Activated CD4-positive, alpha-beta T cell treated with anti-CD3 and anti-CD28 coated beads, Interleukin-2, amount 10 ng/mL, durations not matched to agents 24 days and 14 days (primary cell): ENCODE measurements at regions of chr1 and their contacts with region 1.

Region 1: GRCh38 chr1:182391362-182392044 is at the start of gene GLUL:
- DNase-seq: peak; percentile 94
- H3K4me3 Mint-ChIP-seq: peak within 1 kb of the TSS; percentile 96
- H3K27ac Mint-ChIP-seq: peak within 1 kb of the TSS; percentile 93
- H3K4me1 Mint-ChIP-seq: peaks cover 40% of the 10 kb centered on the region
- H3K27me3 Mint-ChIP-seq: peaks cover 18% of the 10 kb centered on the region
- total RNA-seq, gene GLUL: 78.1 and 80.2 TPM in 2 replicates

Region 2: GRCh38 chr1:181479137-181479745 is 912.3 kb before region 1 on chr1:
- intact Hi-C with region 1: loop called (anchors 10 kb)
- DNase-seq: peak; percentile 79
- H3K4me3 Mint-ChIP-seq: no peak overlapping the region
- H3K27ac Mint-ChIP-seq: no peak overlapping the region
- H3K4me1 Mint-ChIP-seq: peaks cover 7% of the 10 kb centered on the region
- H3K27me3 Mint-ChIP-seq: peaks cover 36% of the 10 kb centered on the region

Region 3: DNA sequence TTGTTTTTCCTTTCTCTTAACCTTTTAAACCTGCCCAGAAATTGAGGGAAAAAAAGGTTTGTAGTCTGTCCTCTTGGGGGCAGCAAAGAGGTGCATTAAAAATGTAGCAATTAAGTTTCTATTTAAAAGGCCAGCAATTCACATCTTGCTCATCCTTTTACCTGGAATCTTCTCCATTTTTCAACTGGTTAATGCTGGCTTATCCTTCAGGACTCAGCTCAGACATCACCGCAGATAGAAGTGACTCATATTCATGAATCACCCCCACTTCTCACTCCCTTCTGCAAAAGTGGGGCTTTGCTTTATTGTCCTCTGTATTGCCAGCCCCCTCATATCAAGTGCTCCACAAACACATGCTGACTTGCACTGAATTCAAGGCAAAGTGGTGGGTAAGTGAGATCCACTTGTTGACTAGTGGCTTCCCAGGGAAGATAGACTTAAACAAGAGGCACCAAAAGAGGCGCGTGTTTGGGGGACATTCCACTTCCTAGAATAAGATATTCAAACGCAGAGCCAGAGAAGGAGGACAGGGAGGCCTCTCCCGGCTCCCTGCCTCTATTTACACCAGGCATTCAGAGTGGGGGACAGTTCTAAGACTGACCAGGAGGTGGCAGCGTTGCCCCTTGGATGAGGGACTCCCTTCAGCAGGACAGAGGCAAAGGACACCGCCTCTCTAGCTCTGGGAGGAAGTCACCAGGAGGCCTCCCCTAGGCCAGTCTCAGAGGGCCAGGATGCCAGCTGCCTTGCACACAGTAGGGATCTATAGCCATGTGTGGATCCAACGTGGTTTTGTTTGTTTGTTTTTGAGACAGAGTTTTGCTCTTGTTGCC is 306.8 kb before region 1 on chr1:
- intact Hi-C with region 1: loop called (anchors 1 kb)
- DNase-seq: peak; percentile 95
- H3K4me3 Mint-ChIP-seq: peak overlapping the region; percentile 13
- H3K27ac Mint-ChIP-seq: peak overlapping the region; percentile 66
- H3K4me1 Mint-ChIP-seq: peaks cover 51% of the 10 kb centered on the region
- H3K27me3 Mint-ChIP-seq: no peaks in the 10 kb centered on the region

Region 4: DNA sequence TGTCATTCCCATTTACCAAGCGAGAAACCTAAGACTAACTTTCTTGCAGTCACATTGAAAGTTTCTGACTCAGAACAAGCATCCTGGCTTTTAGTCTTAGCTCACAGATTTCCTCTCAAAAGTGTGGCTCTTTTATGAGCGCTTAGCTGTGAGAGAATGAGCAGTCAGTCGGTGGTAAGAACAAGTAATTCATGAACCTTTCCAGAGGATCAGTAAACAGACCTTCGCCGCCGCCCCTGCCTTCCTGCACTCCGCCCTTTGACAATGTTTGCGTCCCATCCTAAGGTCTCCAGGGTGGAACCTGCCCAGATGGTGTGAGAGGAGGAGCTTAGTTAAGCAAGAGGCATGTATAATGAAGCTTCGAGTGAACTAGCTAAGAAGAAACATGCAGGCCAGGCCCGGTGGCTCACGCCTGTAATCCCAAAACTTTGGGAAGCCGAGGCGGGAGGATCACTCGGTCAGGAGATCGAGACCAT is 142.3 kb before region 1 on chr1:
- intact Hi-C with region 1: loop called (anchors 1 kb)
- DNase-seq: peak; percentile 79
- H3K4me3 Mint-ChIP-seq: no peak overlapping the region
- H3K27ac Mint-ChIP-seq: peak overlapping the region; percentile 80
- H3K4me1 Mint-ChIP-seq: peaks cover 14% of the 10 kb centered on the region
- H3K27me3 Mint-ChIP-seq: no peaks in the 10 kb centered on the region

Region 5: GRCh38 chr1:182404781-182405180 is 13.3 kb after region 1 on chr1:
- intact Hi-C with region 1: no loop called
- DNase-seq: no peak
- H3K4me3 Mint-ChIP-seq: no peak overlapping the region
- H3K27ac Mint-ChIP-seq: no peak overlapping the region
- H3K4me1 Mint-ChIP-seq: no peaks in the 10 kb centered on the region
- H3K27me3 Mint-ChIP-seq: peaks cover 43% of the 10 kb centered on the region

Region 6: GRCh38 chr1:182839209-182840065 is 447.9 kb after region 1 on chr1 and contains the start of gene DHX9:
- intact Hi-C with region 1: loop called (anchors 1 kb)
- DNase-seq: peak; percentile 99
- H3K4me3 Mint-ChIP-seq: peak within 1 kb of the TSS; percentile 92
- H3K27ac Mint-ChIP-seq: peak within 1 kb of the TSS; percentile 94
- H3K4me1 Mint-ChIP-seq: peaks cover 37% of the 10 kb centered on the region
- H3K27me3 Mint-ChIP-seq: peaks cover 3% of the 10 kb centered on the region
- total RNA-seq, gene DHX9: 344 and 355 TPM in 2 replicates